Activated CD4-positive, alpha-beta T cell treated with anti-CD3 and anti-CD28 coated beads for 36 hours (primary cell): ENCODE measurements at regions of chr12 and their contacts with region 1.

Region 1: DNA sequence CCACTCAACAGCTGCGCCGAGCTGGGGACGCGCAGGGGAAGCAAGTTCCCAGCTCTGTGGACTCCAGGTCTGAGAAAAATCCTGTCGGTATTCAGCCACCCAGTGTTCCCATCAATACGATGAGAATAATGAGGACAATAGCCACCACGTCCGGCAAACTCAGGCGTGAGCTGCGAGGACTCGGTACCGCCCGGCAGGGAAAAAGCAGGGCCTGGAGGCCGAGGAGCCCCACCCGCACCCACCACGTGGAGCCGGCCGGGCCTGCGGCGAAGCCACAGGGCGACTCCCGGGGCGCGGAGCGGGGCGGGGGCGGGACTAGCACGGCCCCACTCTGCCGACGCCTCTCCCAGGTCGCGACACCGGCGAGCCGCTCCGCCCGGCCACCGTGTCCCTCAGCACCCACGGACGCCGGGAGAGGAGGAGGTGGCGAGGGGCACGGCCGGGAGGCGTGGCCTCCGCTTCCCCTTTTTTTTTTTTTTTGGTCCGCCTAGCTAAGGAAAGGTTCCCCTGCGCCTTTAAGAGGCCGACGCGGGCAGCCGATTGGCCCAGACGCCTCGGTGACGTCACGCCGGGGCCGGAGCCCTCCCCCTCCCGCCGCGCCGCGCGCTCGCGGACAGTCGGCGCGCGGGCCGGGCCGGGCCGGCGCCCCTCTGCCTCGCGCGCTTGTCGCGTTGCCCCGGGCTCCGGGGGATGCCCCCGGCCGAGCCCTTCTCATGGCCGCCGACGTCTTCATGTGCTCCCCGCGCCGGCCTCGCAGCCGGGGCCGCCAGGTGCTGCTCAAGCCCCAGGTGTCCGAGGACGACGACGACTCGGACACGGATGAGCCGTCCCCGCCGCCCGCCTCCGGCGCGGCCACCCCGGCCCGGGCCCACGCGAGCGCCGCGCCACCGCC is at the start of gene MLXIP:
- DNase-seq: peak; percentile 94
- ATAC-seq: peak; percentile 68
- H3K4me3 Mint-ChIP-seq: peak within 1 kb of the TSS; percentile 76
- H3K27ac Mint-ChIP-seq: peak within 1 kb of the TSS; percentile 82
- H3K4me1 Mint-ChIP-seq: peaks cover 56% of the 10 kb centered on the region
- H3K27me3 Mint-ChIP-seq: no peaks in the 10 kb centered on the region
- total RNA-seq, gene MLXIP: 17.7 to 26.4 TPM

Region 2: GRCh38 chr12:121579981-121580868 is 498.2 kb before region 1 on chr12:
- CTCF ChIA-PET with region 1: no interaction called
- POLR2A ChIA-PET with region 1: no interaction called
- intact Hi-C with region 1: loop called in 1 of 2 experiments (anchors 10 kb)
- DNase-seq: peak; percentile 87
- ATAC-seq: peak; percentile 76
- H3K4me3 Mint-ChIP-seq: peak overlapping the region; percentile 83
- H3K27ac Mint-ChIP-seq: peak overlapping the region; percentile 99
- H3K4me1 Mint-ChIP-seq: peaks cover 24% of the 10 kb centered on the region
- H3K27me3 Mint-ChIP-seq: no peaks in the 10 kb centered on the region

Region 3: GRCh38 chr12:121992059-121992879 is 86.1 kb before region 1 on chr12:
- CTCF ChIA-PET with region 1: interaction called, 3 read pairs
- POLR2A ChIA-PET with region 1: interaction called, 3 read pairs
- intact Hi-C with region 1: loop called in 1 of 2 experiments (anchors 2 kb)
- DNase-seq: peak; percentile 84
- ATAC-seq: peak; percentile 100
- H3K4me3 Mint-ChIP-seq: peak overlapping the region; percentile 30
- H3K27ac Mint-ChIP-seq: peak overlapping the region; percentile 83
- H3K4me1 Mint-ChIP-seq: peaks cover 23% of the 10 kb centered on the region
- H3K27me3 Mint-ChIP-seq: peaks cover 5% of the 10 kb centered on the region

Region 4: DNA sequence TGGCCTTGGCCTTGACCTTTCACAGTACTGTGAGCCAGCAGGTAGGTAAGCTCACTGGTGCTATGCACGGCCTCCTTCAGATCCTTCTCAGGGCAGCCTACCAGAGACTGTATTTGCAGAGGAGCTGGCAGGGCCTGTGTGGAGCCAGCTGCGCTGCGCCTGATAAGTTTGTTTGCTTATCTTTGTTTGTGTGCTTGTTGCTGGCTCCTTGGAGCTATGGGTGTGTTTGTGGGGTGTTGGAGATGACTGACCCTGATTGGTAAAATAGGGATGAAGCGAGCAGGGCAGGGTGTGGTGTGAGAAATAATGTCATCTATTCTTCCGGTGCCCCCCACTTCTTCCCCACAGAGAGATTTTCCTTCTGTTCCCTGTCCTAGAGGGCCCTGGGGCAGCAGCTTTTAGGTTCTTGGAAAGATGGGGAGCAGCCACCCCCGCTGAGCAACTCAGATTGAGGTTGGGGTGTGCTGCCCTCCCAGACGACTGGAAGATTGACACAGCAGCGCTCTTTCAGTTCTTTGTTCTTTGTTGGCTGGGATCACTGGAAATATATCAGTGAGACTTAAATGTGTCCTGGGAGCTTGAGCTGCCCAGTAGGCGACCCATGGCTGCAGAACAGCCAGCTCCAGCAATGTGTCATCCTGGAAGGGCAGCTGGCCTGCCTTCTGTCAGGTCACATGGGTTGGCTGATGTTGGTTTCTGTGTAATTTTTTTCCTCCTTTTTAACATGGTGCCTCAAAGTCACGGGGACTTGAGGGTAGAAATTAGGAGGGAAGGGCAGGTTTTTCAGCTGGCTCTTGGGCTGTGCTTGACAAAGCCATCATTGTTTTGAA is 19.8 kb after region 1 on chr12:
- CTCF ChIA-PET with region 1: interaction called, 4 read pairs
- POLR2A ChIA-PET with region 1: interaction called, 6 read pairs
- intact Hi-C with region 1: loop called in 1 of 2 experiments (anchors 2 kb)
- DNase-seq: no peak
- ATAC-seq: peak; percentile 45
- H3K4me3 Mint-ChIP-seq: no peak overlapping the region
- H3K27ac Mint-ChIP-seq: peak overlapping the region; percentile 48
- H3K4me1 Mint-ChIP-seq: peaks cover 64% of the 10 kb centered on the region
- H3K27me3 Mint-ChIP-seq: no peaks in the 10 kb centered on the region

Region 5: DNA sequence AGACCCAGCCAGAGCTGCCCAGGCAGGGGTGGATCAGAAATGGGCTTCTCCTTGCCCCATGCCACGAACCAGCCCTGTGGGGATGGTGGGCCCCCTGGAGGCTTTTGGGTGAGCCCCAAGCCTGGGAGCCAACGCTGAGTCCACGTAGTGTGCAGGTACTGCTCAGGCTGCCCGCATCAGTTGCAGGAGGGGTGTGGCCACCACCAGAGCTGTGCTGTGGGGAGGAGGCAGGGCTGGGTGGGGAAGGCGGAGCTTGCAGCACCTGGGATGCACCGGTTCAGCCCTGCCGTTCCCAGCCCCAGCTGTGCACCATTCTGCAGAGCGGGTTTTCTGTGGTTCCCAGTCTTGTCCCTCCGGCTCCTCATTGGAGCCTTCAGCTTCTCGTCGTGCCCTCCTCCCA is 59.3 kb after region 1 on chr12:
- CTCF ChIA-PET with region 1: no interaction called
- POLR2A ChIA-PET with region 1: no interaction called
- intact Hi-C with region 1: no loop called
- DNase-seq: no peak
- ATAC-seq: peak; percentile 55
- H3K4me3 Mint-ChIP-seq: no peak overlapping the region
- H3K27ac Mint-ChIP-seq: no peak overlapping the region
- H3K4me1 Mint-ChIP-seq: no peaks in the 10 kb centered on the region
- H3K27me3 Mint-ChIP-seq: no peaks in the 10 kb centered on the region

Region 6: DNA sequence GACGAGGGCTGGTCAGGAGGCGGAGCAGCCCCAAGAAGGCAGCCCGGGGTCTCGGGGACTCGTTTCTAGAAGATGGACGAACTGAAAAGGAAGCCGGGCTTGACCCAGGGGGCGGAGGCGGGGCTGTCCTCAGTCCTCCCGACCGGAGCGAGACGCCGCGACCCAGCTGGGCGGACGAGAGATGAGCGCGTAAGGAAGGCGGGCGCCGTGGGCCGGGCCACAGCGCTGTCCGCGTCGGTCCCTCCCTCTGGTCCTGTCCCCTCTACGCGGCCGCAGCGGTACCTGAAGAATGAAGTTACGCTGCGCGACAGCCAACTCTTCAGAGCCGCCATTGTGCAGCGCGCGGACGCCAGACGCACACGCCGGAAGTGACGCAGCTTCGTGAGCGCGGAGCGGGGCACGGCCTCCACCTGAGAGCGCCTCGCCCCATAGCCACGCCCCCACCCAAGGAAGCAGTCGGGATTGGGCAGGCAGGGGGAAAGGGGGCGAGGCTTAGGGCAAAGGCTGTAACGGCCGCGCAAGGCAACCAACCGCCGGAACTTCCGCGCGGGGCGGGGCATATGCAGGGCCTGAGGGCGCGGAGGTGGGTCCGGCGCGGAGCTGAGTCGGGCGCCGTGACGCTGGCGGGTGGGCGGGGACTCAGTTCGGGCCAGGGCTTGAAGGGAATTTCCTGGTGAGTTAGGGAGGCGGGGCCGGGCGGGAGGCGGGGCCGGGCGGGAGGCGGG is 147.5 kb after region 1 on chr12 and contains the start of gene DIABLO:
- CTCF ChIA-PET with region 1: interaction called, 3 read pairs
- POLR2A ChIA-PET with region 1: no interaction called
- intact Hi-C with region 1: loop called in 1 of 2 experiments (anchors 1 kb)
- DNase-seq: peak; percentile 100
- ATAC-seq: peak; percentile 98
- H3K4me3 Mint-ChIP-seq: peak within 1 kb of the TSS; percentile 92
- H3K27ac Mint-ChIP-seq: peak within 1 kb of the TSS; percentile 93
- H3K4me1 Mint-ChIP-seq: peaks cover 29% of the 10 kb centered on the region
- H3K27me3 Mint-ChIP-seq: no peaks in the 10 kb centered on the region
- total RNA-seq, gene DIABLO: 46.3 to 47.0 TPM

Region 7: GRCh38 chr12:122526683-122527477 is 448.5 kb after region 1 on chr12 and contains the starts of genes KNTC1 and RSRC2:
- CTCF ChIA-PET with region 1: no interaction called
- POLR2A ChIA-PET with region 1: no interaction called
- intact Hi-C with region 1: loop called in 1 of 2 experiments (anchors 1 kb)
- DNase-seq: peak; percentile 99
- ATAC-seq: peak; percentile 93
- H3K4me3 Mint-ChIP-seq: no peak within 1 kb of the TSS
- H3K27ac Mint-ChIP-seq: no peak within 1 kb of the TSS
- H3K4me1 Mint-ChIP-seq: peaks cover 37% of the 10 kb centered on the region
- H3K27me3 Mint-ChIP-seq: no peaks in the 10 kb centered on the region
- total RNA-seq, gene KNTC1: 136 to 175 TPM
- total RNA-seq, gene RSRC2: 92.7 to 105 TPM